ENCODE measurements at regions of chr1 and their contacts with region 1.

Region 1: GRCh38 chr1:203290261-203291089 is 14.8 kb upstream of the BTG2 start:
- DNase-seq: peak; percentile 78
- H3K4me3 ChIP-seq: no peak overlapping the region
- H3K27ac ChIP-seq: peak overlapping the region; percentile 65
- H3K4me1 ChIP-seq: peaks cover 27% of the 10 kb centered on the region
- H3K27me3 ChIP-seq: no peaks in the 10 kb centered on the region
- CTCF ChIP-seq: no peak

Region 2: DNA sequence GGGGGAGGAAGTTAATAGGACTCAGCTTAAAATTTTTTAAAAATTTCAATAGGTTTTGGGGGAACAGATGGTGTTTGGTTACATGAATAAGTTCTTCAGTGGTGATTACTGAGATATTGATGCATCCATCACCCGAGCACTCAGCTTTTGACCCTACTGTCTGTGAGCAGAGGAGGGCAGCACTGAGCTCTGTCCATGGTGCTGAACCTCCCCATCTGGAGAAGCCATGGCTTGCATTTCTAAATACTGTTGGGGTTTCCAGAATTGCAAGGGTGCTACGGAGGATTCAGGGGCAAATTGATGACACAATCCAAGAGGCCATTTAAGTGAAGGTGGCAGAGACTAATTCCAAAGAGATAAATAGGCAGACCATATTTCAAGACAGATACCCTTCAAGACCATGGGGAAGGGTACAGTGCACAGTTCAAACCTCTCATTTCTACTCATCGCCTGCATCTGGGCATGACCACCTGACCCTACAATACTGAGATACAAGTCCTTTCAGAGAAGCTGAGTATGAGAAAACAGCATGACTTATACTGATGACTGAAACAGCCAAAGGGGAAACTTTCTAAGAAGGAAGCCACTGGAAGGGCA is 597.4 kb before region 1 on chr1:
- CTCF ChIA-PET with region 1: no interaction called
- POLR2A ChIA-PET with region 1: no interaction called
- intact Hi-C with region 1: no loop called
- DNase-seq: peak; percentile 74
- H3K4me3 ChIP-seq: no peak overlapping the region
- H3K27ac ChIP-seq: no peak overlapping the region
- H3K4me1 ChIP-seq: no peaks in the 10 kb centered on the region
- H3K27me3 ChIP-seq: peaks cover 61% of the 10 kb centered on the region
- CTCF ChIP-seq: peak; percentile 42

Region 3: GRCh38 chr1:203479646-203480045 is 189.2 kb after region 1 on chr1:
- CTCF ChIA-PET with region 1: no interaction called
- POLR2A ChIA-PET with region 1: interaction called, 10 read pairs
- intact Hi-C with region 1: no loop called
- DNase-seq: no peak
- H3K4me3 ChIP-seq: no peak overlapping the region
- H3K27ac ChIP-seq: no peak overlapping the region
- H3K4me1 ChIP-seq: no peaks in the 10 kb centered on the region
- H3K27me3 ChIP-seq: no peaks in the 10 kb centered on the region
- CTCF ChIP-seq: no peak